Heart right ventricle (tissue), 16 donors: ENCODE measurements at regions of chr2 and their contacts with region 1.

Region 1: GRCh38 chr2:85813982-85814801 is 60.4 kb downstream of the ATOH8 start:
- DNase-seq: peak; percentile 91 to 93
- ATAC-seq: peak; percentile 91 to 97 (median 94)
- H3K4me3 ChIP-seq: no peak overlapping the region
- H3K27ac ChIP-seq: no peak overlapping the region
- H3K4me1 ChIP-seq: peaks cover 7 to 28% (median 19%) of the 10 kb centered on the region in 9 donors
- H3K27me3 ChIP-seq: no peaks in the 10 kb centered on the region
- CTCF ChIP-seq: peak; percentile 89 to 97 (median 96)

Region 2: GRCh38 chr2:85635636-85636035 is 178.6 kb before region 1 on chr2:
- intact Hi-C with region 1: loop called in 6 of 10 experiments (anchors 2 to 10 kb)
- DNase-seq: no peak
- ATAC-seq: peak in 3 of 8 donors; percentile 42 to 60 (median 59)
- H3K4me3 ChIP-seq: no peak overlapping the region
- H3K27ac ChIP-seq: peak overlapping the region in 1 of 10 donors; percentile 4
- H3K4me1 ChIP-seq: peaks cover 0 to 14% (median 0%) of the 10 kb centered on the region in 9 donors
- H3K27me3 ChIP-seq: no peaks in the 10 kb centered on the region
- CTCF ChIP-seq: no peak

Region 3: DNA sequence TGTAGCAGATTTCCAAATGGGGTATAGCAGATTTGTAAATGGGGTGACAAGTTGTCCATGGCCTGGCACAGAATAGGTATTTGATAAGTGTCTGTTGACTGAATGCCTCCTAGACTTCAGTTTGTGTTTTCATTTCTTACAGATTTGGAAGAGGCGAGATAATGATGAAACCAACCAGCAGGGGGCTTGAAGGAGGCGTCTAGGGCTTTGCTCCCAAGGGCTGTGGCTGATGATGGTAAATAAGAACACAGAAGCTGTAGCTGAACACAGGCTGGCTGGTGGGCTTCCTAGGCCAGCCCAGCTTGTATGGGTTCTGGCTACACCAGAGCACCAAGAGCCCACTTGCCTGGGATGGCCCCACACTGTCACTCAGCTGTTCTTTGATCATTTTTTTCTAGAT is 165.6 kb before region 1 on chr2:
- intact Hi-C with region 1: loop called in 3 of 10 experiments (anchors 5 to 10 kb)
- DNase-seq: no peak
- ATAC-seq: peak in 7 of 8 donors; percentile 30 to 77 (median 48)
- H3K4me3 ChIP-seq: no peak overlapping the region
- H3K27ac ChIP-seq: peak overlapping the region in 6 of 10 donors; percentile 8 to 56 (median 46)
- H3K4me1 ChIP-seq: peaks cover 0 to 17% (median 12%) of the 10 kb centered on the region in 9 donors
- H3K27me3 ChIP-seq: no peaks in the 10 kb centered on the region
- CTCF ChIP-seq: peak; percentile 23 to 65 (median 44)